Vagina (tissue), 2 donors: ENCODE measurements at regions of chr9 and their contacts with region 1.

Region 1: DNA sequence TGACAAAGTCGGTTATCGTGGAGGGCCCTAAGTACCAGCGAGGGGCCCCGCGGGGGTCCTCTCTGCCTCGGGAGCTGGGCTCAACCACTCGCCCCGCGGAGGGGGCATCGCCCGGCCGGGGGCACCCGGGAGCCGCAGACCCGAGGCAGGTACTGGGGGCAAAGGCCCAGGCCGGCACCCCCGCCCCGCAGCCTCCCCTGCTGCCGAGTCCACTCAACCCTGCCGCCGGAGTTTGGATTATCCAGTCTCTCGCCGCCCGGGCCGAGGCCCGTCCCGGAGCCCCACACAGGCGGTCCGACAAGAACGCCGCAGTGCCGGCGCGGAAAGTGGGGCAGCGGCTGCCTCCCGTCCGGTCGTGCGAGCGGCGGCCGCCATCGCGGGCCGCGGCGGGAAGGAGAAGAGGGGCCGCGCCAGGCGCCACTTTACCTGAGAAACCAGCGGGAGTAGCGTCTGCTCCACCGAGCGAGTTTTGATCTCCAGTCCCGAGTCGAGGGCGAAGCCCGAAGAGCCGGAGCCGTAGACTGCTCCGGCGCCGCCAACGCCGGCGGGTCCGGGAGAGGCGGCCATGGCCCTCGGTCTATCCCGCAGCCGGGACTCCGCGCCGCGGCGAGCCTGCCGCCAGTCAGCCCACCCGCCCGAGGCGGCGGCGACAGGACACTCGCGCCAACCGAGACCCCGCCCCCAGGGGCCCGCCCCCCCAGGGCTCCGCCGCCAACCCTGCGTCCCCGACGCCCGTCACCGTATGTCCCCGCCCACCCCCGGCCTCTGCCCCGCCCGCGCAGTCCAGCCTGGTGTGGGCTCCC is at the start of gene CTNNAL1:
- DNase-seq: peak; percentile 89 to 97
- H3K4me3 ChIP-seq: peak within 1 kb of the TSS; percentile 89 to 95
- H3K27ac ChIP-seq: peak within 1 kb of the TSS; percentile 93
- H3K4me1 ChIP-seq: peaks cover 26% of the 10 kb centered on the region
- H3K27me3 ChIP-seq: no peaks in the 10 kb centered on the region
- CTCF ChIP-seq: no peak
- POLR2A ChIP-seq: peak; percentile 40 to 86
- total RNA-seq, gene CTNNAL1: 18.2 TPM

Region 2: GRCh38 chr9:109052416-109052815 is 39.3 kb after region 1 on chr9:
- intact Hi-C with region 1: no loop called
- DNase-seq: no peak
- H3K4me3 ChIP-seq: no peak overlapping the region
- H3K27ac ChIP-seq: no peak overlapping the region
- H3K4me1 ChIP-seq: no peaks in the 10 kb centered on the region
- H3K27me3 ChIP-seq: no peaks in the 10 kb centered on the region
- CTCF ChIP-seq: no peak
- POLR2A ChIP-seq: no peak

Region 3: DNA sequence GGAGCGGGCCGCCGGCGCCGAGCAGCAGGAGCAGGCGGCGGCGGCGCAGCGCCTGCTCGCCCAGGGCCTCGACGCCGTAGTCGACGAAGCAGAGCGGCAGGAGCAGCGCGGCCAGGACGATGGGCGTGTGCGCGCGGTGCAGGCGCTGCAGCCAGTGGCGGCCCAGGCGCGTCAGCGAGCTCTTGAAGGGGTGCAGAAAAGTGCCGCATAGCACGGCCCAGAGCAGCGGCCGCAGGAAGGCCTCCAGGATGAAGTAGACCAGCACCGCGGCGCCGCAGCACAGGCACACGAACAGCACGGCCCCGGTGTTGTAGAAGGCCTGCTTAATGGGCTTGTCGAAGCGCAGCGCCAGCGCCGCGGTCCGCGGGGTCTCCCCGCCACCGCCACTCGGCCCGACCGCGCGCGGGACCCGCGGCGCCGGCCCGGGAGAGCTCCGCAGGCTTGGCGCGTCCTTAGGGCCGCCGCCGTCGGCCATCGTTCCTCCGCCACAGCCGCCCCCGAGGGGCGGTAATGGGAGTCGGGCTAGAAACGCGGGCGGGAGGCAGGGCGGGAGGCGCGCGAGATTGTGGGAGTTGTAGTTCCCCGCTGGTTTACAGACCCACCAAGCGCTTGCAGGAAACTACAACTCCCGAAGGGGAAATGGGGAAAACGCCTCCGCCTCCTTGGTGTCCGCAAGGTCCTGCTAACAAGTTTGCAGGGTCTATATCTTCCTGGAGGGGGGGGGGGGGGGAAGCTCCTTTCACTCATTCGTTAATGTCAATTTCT is 106.5 kb after region 1 on chr9 and contains the start of gene TMEM245:
- intact Hi-C with region 1: loop called (anchors 2 kb)
- DNase-seq: peak in 1 of 2 donors; percentile 99
- H3K4me3 ChIP-seq: peak within 1 kb of the TSS; percentile 85 to 95
- H3K27ac ChIP-seq: peak within 1 kb of the TSS; percentile 90
- H3K4me1 ChIP-seq: peaks cover 44% of the 10 kb centered on the region
- H3K27me3 ChIP-seq: no peaks in the 10 kb centered on the region
- CTCF ChIP-seq: no peak
- POLR2A ChIP-seq: peak; percentile 57 to 94
- total RNA-seq, gene TMEM245: 47.4 TPM

Region 4: DNA sequence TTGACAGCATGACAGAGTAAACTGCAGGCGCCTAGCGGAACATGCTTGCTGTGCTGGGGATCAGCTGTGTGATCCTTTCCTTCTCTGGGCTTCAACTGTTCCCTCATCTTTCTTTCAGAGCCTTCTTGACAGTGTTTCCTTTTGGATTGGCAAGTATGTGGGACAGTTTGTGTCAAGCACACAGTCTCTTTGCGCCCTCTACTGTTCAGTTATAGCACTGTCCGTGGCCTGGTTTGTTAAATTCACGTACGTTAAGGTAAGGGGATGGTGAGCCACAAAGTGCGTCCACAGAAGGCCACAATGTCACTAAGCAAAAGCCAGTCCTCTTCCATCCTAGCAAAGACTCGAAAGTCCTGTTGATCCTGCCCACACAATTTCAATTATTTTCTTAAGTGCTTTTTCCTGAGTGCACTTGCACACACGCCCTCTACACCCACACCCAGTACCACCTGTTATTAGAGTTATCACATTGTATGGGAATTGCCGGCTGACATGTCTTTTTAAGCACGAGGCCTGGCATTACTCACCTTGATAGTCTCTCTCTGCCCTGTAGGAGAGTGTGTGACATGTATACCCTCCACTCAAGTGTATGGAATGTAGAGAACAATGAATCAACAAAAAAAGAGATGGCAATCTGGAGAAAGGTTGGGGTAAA is 507.5 kb after region 1 on chr9:
- intact Hi-C with region 1: no loop called
- DNase-seq: no peak
- H3K4me3 ChIP-seq: no peak overlapping the region
- H3K27ac ChIP-seq: no peak overlapping the region
- H3K4me1 ChIP-seq: no peaks in the 10 kb centered on the region
- H3K27me3 ChIP-seq: no peaks in the 10 kb centered on the region
- CTCF ChIP-seq: peak; percentile 31 to 56 (median 48)
- POLR2A ChIP-seq: no peak